Activated CD4-positive, alpha-beta T cell treated with anti-CD3 and anti-CD28 coated beads, Interleukin-2, amount 10 ng/mL, durations not matched to agents 7 days and 5 days (primary cell): ENCODE measurements at regions of chr11 and their contacts with region 1.

Region 1: GRCh38 chr11:82942376-82942775 is 40.8 kb downstream of the DDIAS start:
- DNase-seq: no peak
- H3K4me3 Mint-ChIP-seq: no peak overlapping the region
- H3K27ac Mint-ChIP-seq: no peak overlapping the region
- H3K4me1 Mint-ChIP-seq: no peaks in the 10 kb centered on the region
- H3K27me3 Mint-ChIP-seq: no peaks in the 10 kb centered on the region

Region 2: DNA sequence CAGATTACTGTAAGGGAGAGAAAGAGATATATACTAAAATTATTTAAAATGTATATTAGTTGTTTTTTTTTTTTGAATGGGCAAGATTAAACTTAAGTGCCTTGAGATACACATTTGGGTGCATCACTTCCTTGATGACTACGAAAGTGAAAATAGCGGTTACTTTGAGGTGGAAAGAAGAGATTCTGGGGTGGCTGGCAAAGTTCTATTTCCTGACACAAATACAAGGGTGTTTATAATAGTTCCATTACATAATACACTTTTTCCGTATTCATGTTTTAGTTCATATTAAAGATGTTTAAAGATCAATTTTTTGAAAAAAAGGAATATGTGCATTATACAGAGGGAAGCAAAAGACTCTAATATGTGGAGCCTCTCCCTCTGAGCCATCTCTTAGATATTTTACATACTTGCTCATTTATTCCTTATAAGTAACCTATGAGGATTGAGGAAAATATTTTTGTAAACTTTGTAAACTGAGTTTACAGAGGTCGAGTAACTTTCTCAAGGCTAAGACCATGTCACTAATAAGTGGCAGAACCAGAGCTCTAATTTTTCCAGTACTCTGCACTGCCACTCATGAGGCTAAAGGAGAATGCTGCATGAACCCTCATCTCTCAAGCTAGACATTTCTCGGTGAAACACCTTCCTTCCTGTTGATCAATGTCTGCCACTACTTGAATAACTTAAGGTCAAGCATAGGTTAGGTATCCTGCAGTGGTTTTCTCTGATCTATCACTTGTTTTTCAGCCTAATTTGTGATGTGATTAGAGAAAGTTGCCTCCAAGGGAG is 17.8 kb after region 1 on chr11:
- CTCF ChIA-PET with region 1: interaction called, 17 read pairs
- POLR2A ChIA-PET with region 1: no interaction called
- DNase-seq: peak; percentile 72
- H3K4me3 Mint-ChIP-seq: peak overlapping the region; percentile 66
- H3K27ac Mint-ChIP-seq: peak overlapping the region; percentile 89
- H3K4me1 Mint-ChIP-seq: peaks cover 69% of the 10 kb centered on the region
- H3K27me3 Mint-ChIP-seq: peaks cover 8% of the 10 kb centered on the region

Region 3: GRCh38 chr11:82980292-82980691 is 37.9 kb after region 1 on chr11:
- CTCF ChIA-PET with region 1: no interaction called
- POLR2A ChIA-PET with region 1: no interaction called
- DNase-seq: no peak
- H3K4me3 Mint-ChIP-seq: no peak overlapping the region
- H3K27ac Mint-ChIP-seq: no peak overlapping the region
- H3K4me1 Mint-ChIP-seq: peaks cover 19% of the 10 kb centered on the region
- H3K27me3 Mint-ChIP-seq: no peaks in the 10 kb centered on the region

Region 4: GRCh38 chr11:83025267-83025720 is 82.9 kb after region 1 on chr11:
- CTCF ChIA-PET with region 1: no interaction called
- POLR2A ChIA-PET with region 1: no interaction called
- DNase-seq: no peak
- H3K4me3 Mint-ChIP-seq: no peak overlapping the region
- H3K27ac Mint-ChIP-seq: no peak overlapping the region
- H3K4me1 Mint-ChIP-seq: peaks cover 22% of the 10 kb centered on the region
- H3K27me3 Mint-ChIP-seq: no peaks in the 10 kb centered on the region